Activated CD4-positive, alpha-beta memory T cell treated with anti-CD3 and anti-CD28 coated beads, Interleukin-2, amount 10 ng/mL, durations not matched to agents 7 days and 5 days (primary cell): ENCODE measurements at regions of chr17 and their contacts with region 1.

Region 1: GRCh38 chr17:2511462-2512369 is at the start of gene METTL16:
- DNase-seq: peak; percentile 99
- H3K4me3 Mint-ChIP-seq: no peak within 1 kb of the TSS
- H3K27ac Mint-ChIP-seq: no peak within 1 kb of the TSS
- H3K4me1 Mint-ChIP-seq: peaks cover 15% of the 10 kb centered on the region
- H3K27me3 Mint-ChIP-seq: no peaks in the 10 kb centered on the region
- total RNA-seq, gene METTL16: 19.7 to 21.3 TPM

Region 2: DNA sequence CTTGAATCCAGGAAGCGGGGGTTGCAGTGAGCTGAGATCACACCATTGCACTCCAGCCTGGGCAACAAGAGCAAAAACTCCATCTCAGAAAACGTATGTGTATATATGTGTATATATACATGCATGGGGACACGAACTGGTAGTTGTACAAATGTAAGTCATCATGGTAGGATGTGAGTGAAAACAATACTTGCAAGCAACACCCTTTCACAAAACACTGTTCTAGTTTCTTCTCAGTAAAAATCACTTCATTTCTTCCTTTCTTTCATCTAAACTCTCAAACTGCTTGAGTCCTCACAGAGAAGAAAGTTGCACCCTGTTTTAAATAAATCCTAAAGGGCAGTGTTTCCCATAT is 51.8 kb before region 1 on chr17:
- CTCF ChIA-PET with region 1: no interaction called
- POLR2A ChIA-PET with region 1: no interaction called
- DNase-seq: no peak
- H3K4me3 Mint-ChIP-seq: no peak overlapping the region
- H3K27ac Mint-ChIP-seq: peak overlapping the region; percentile 48
- H3K4me1 Mint-ChIP-seq: peaks cover 19% of the 10 kb centered on the region
- H3K27me3 Mint-ChIP-seq: no peaks in the 10 kb centered on the region

Region 3: GRCh38 chr17:2482218-2482617 is 29.5 kb before region 1 on chr17:
- CTCF ChIA-PET with region 1: no interaction called
- POLR2A ChIA-PET with region 1: interaction called, 22 read pairs
- DNase-seq: no peak
- H3K4me3 Mint-ChIP-seq: peak overlapping the region; percentile 49
- H3K27ac Mint-ChIP-seq: peak overlapping the region; percentile 66
- H3K4me1 Mint-ChIP-seq: peaks cover 25% of the 10 kb centered on the region
- H3K27me3 Mint-ChIP-seq: no peaks in the 10 kb centered on the region

Region 4: GRCh38 chr17:2592971-2593820 is 81.5 kb after region 1 on chr17 and contains the start of gene PAFAH1B1:
- CTCF ChIA-PET with region 1: no interaction called
- POLR2A ChIA-PET with region 1: interaction called, 17 read pairs
- DNase-seq: peak; percentile 95
- H3K4me3 Mint-ChIP-seq: peak within 1 kb of the TSS; percentile 90
- H3K27ac Mint-ChIP-seq: peak within 1 kb of the TSS; percentile 90
- H3K4me1 Mint-ChIP-seq: peaks cover 27% of the 10 kb centered on the region
- H3K27me3 Mint-ChIP-seq: peaks cover 1% of the 10 kb centered on the region
- total RNA-seq, gene PAFAH1B1: 183 to 186 TPM